Caco-2 (cell line): ENCODE measurements at regions of chr21 and their contacts with region 1.

Region 1: DNA sequence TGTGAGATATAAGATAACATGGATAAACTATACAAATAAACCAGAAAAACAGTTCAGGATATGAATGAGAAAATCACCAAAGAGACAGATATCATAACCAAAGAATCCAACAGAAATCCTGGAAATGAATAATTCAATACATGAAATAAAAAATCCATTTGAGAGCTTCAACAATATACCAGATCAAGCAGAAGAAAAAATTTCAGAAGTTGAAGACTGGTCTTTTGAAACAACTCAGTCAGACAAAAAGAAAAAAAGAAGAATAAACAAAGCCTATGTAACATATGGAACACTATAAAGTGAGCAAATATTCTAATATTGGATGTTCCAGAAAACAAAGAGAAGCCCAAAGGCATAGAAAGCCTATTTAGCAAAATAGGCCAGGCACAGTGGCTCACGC is 5.2 kb upstream of the KRTAP12-2 start:
- DNase-seq: no peak
- H3K4me3 ChIP-seq: no peak overlapping the region
- H3K4me3 Mint-ChIP-seq: no peak overlapping the region
- H3K27ac Mint-ChIP-seq: no peak overlapping the region
- H3K4me1 ChIP-seq: no peaks in the 10 kb centered on the region
- H3K4me1 Mint-ChIP-seq: no peaks in the 10 kb centered on the region
- H3K27me3 ChIP-seq: no peaks in the 10 kb centered on the region
- H3K27me3 Mint-ChIP-seq: peaks cover 31% of the 10 kb centered on the region
- CTCF ChIP-seq: no peak

Region 2: GRCh38 chr21:44551340-44551961 is 120.5 kb before region 1 on chr21 and contains the start of gene KRTAP10-2:
- CTCF ChIA-PET with region 1: no interaction called
- POLR2A ChIA-PET with region 1: no interaction called
- intact Hi-C with region 1: no loop called
- DNase-seq: no peak
- H3K4me3 ChIP-seq: no peak within 1 kb of the TSS
- H3K4me3 Mint-ChIP-seq: no peak within 1 kb of the TSS
- H3K27ac Mint-ChIP-seq: peak within 1 kb of the TSS; percentile 59
- H3K4me1 ChIP-seq: 0 out of 2 replicates have a peak, but pooled peaks cover 3% of the 10 kb centered on the region
- H3K4me1 Mint-ChIP-seq: no peaks in the 10 kb centered on the region
- H3K27me3 ChIP-seq: no peaks in the 10 kb centered on the region; the same call in 1 of the 2 replicates
- H3K27me3 Mint-ChIP-seq: peaks cover 6% of the 10 kb centered on the region
- CTCF ChIP-seq: no peak
- total RNA-seq, gene KRTAP10-2: not detected in 2 replicates

Region 3: DNA sequence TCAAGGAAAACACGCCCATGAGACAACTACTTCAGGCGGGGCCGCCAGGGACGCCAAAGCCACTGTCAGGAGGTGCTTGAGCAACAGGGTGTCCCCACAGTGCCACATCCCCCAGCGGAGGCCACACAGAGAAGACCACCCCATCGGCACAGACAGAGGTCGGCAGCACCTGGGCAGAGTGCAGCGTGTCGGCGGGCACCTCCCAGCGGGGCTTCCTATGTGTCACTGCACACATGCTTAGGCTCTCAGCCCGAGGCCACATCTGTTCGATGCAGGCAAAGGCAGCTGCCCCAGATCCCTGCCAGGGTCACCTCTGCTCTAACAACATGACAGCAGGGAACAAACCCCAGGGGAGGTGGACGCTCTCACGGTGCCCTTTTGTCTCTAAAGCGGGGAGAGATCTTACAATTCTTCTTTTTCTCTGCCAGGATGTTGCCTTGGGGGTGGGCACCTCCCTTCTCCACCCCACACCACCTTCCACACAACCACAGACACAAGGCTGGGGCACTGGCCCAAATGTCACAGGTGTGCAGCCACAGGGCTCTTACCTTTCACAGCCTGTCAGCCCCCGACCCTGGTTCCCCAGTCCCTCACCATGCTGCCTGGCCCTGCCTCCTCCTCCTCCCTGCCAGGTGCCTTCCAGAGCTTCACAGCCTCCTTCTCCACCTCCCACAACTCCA is 55.9 kb before region 1 on chr21:
- CTCF ChIA-PET with region 1: no interaction called
- POLR2A ChIA-PET with region 1: no interaction called
- intact Hi-C with region 1: no loop called
- DNase-seq: no peak
- H3K4me3 ChIP-seq: no peak overlapping the region
- H3K4me3 Mint-ChIP-seq: no peak overlapping the region
- H3K27ac Mint-ChIP-seq: no peak overlapping the region
- H3K4me1 ChIP-seq: no peaks in the 10 kb centered on the region
- H3K4me1 Mint-ChIP-seq: no peaks in the 10 kb centered on the region
- H3K27me3 ChIP-seq: no peaks in the 10 kb centered on the region
- H3K27me3 Mint-ChIP-seq: peaks cover 6% of the 10 kb centered on the region
- CTCF ChIP-seq: no peak

Region 4: GRCh38 chr21:44697811-44698734 is 26.2 kb after region 1 on chr21:
- CTCF ChIA-PET with region 1: no interaction called
- POLR2A ChIA-PET with region 1: no interaction called
- intact Hi-C with region 1: loop called (anchors 2 kb)
- DNase-seq: peak; percentile 24 to 61
- H3K4me3 ChIP-seq: no peak overlapping the region
- H3K4me3 Mint-ChIP-seq: no peak overlapping the region
- H3K27ac Mint-ChIP-seq: no peak overlapping the region
- H3K4me1 ChIP-seq: peaks cover 9% of the 10 kb centered on the region; the same call in 1 of the 2 replicates
- H3K4me1 Mint-ChIP-seq: peaks cover 12% of the 10 kb centered on the region
- H3K27me3 ChIP-seq: no peaks in the 10 kb centered on the region
- H3K27me3 Mint-ChIP-seq: peaks cover 3% of the 10 kb centered on the region
- CTCF ChIP-seq: peak in 1 of 2 experiments; percentile 8